Activated CD4-positive, alpha-beta T cell treated with anti-CD3 and anti-CD28 coated beads, Interleukin-2, amount 10 ng/mL, durations not matched to agents 24 days and 14 days (primary cell): ENCODE measurements at regions of chr4 and their contacts with region 1.

Region 1: DNA sequence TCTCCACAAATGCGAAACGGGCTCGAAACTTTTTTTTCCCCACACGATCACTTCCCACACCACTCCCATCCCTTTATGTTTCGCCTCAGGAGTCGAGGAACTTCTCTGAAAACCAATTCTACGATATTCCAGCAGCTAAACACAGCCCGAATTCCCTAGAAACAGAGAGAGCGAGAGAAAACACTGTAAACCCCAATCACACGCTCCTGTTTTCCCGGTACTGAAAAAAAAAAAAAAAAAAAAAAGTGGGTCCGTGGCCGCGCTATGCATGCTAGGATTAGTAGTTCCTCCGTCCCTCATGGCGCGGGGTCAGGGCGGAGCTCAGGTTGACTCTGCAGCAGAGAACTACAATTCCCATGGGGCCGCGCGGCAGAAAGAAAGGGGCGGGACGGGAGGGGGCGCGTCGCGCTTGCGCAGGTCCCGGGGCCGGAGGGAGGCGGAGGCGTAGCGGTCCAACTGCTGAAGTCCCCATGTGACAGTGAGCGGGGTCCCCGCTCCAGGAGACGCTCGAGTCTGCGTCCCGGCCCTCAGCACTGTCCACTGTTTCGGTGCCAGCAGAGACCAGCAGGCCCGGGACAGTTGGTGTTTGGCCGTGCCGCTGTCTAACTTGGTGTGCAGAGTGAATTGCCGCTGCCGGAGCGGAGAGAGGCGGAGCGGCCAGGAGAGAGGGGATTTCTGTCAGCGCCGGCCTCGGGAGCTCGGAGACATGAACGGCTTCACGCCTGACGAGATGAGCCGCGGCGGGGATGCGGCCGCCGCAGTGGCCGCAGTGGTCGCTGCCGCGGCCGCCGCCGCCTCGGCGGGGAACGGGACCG is at the start of gene SAP30:
- DNase-seq: peak; percentile 97
- H3K4me3 Mint-ChIP-seq: peak within 1 kb of the TSS; percentile 100
- H3K27ac Mint-ChIP-seq: peak within 1 kb of the TSS; percentile 99
- H3K4me1 Mint-ChIP-seq: peaks cover 43% of the 10 kb centered on the region
- H3K27me3 Mint-ChIP-seq: no peaks in the 10 kb centered on the region
- total RNA-seq, gene SAP30: 33.1 and 33.8 TPM in 2 replicates

Region 2: DNA sequence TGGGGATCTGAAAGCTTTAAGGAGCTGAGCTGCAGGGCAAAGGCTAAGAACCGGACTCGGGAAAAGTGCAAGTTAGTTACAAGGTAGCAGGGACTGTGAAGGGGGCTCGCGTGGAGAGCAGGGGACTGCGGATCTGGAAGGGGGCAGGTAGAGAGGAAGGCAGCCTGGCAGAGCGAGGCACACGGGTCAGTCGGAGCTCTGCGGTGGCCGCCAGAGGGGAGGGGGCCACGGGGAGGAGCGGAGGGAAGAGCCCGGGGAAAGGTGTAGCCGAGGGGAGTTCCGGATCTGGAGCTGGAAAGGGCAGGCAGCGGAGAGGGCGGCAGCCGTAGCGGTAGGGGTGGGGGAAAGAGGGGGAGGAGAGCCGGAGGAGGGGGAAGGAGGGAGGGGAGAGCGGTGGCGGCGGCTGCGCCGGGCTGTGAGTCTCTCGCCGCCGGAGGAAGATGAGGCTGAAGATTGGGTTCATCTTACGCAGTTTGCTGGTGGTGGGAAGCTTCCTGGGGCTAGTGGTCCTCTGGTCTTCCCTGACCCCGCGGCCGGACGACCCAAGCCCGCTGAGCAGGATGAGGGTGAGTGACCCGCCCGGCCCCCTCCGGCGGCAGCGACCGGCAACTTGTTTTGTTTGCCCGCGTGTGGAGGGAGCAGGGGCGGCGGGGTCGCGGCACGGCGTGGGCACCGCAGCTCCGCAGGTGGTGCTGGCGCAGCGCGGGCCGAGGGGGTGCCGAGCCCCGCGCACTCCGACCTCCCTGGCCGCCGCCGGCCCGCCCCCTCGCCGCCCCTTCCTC is 202.1 kb before region 1 on chr4 and contains the start of gene GALNT7:
- intact Hi-C with region 1: loop called (anchors 1 kb)
- DNase-seq: peak; percentile 86
- H3K4me3 Mint-ChIP-seq: peak within 1 kb of the TSS; percentile 96
- H3K27ac Mint-ChIP-seq: peak within 1 kb of the TSS; percentile 90
- H3K4me1 Mint-ChIP-seq: peaks cover 40% of the 10 kb centered on the region
- H3K27me3 Mint-ChIP-seq: no peaks in the 10 kb centered on the region
- total RNA-seq, gene GALNT7: 25.9 and 26.7 TPM in 2 replicates

Region 3: DNA sequence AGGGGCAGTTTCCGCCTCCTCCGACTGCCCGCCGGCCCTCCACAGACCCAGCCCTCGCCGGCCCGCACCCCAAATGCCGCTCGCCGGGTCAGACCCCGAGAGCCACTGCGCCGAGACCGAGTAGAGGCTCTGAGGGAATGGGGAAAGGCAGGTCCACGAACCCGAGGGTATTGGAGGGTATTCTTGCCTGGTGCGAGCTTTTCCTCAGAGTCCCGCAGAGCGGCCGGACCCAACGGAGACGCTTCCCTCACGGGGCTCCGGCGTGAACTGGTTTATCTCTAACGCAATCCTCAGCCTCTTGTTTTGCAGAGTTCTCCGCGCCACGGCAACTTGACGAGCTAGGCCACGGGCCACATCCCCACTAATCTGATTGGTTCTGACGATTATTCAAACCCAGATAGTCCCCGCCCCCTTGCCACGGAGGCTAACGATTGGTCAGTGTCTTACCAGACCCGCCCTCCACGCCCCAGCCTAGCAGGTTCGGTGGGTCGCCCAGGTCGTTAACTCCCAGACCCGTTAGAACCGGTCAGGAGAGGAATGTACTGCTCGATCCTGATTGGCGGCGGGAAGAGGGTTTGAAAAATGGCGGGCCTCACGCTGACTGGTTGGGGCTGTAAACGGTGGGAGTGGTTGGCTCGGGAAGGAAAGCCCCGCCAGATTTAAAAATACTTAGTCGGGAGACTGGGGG is 36.5 kb before region 1 on chr4 and contains the start of gene HMGB2:
- intact Hi-C with region 1: loop called (anchors 1 kb)
- DNase-seq: peak; percentile 100
- H3K4me3 Mint-ChIP-seq: peak within 1 kb of the TSS; percentile 97
- H3K27ac Mint-ChIP-seq: peak within 1 kb of the TSS; percentile 100
- H3K4me1 Mint-ChIP-seq: peaks cover 47% of the 10 kb centered on the region
- H3K27me3 Mint-ChIP-seq: no peaks in the 10 kb centered on the region
- total RNA-seq, gene HMGB2: 311 and 315 TPM in 2 replicates

Region 4: DNA sequence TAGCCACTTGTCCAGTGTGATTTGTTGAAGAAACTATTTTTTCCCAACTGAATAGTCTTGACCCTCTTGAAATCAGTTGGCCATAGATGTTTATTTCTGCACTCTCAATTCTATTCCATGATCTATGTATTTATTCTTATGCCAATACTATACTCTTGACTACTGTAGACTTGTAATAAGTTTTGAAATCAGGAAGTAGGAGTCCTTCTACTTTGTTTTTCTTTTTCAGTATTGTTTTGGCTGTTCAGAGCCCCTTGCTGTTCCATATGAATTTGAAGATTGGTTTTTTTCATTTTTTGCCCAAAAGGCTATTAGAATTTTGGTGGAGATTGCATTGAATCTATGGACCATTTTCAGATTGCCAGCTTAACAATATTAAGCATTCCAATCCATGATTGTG is 10.3 kb after region 1 on chr4:
- intact Hi-C with region 1: loop called (anchors 1 kb)
- DNase-seq: no peak
- H3K4me3 Mint-ChIP-seq: no peak overlapping the region
- H3K27ac Mint-ChIP-seq: no peak overlapping the region
- H3K4me1 Mint-ChIP-seq: peaks cover 5% of the 10 kb centered on the region
- H3K27me3 Mint-ChIP-seq: peaks cover 5% of the 10 kb centered on the region

Region 5: GRCh38 chr4:173420324-173420752 is 49.7 kb after region 1 on chr4:
- intact Hi-C with region 1: loop called (anchors 2 kb)
- DNase-seq: no peak
- H3K4me3 Mint-ChIP-seq: no peak overlapping the region
- H3K27ac Mint-ChIP-seq: no peak overlapping the region
- H3K4me1 Mint-ChIP-seq: peaks cover 7% of the 10 kb centered on the region
- H3K27me3 Mint-ChIP-seq: peaks cover 3% of the 10 kb centered on the region

Region 6: DNA sequence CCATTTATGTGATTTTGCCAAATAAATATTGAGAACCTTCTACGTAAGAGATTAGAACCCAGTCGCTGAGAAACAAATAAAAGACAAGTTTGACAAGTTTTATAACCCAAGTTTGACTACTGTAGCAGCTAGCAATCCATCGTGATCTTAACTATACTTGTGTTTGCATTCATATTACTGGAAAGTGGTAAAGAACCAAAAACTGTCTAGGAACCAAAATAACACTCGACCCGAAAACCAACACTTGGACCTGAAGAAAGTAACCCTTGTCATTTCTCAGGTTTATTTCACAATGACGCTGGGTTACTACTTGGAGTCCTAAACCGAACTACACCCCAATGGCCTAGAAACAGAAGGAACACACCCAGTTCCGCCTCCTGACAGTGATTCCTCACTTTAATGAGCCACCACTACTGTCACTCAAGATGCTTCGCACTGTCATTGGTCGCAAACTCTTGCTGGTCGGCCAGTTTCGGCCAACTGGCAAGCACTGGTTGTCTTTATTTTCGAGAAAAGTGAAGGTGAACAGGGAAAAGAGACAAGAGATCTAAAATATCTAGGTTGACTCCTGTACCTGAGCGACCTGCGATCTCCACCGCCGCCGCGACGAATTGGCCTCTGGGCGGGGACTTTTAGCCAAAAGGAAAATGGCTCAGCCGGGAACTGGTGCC is 912.3 kb after region 1 on chr4:
- intact Hi-C with region 1: loop called (anchors 5 kb)
- DNase-seq: peak; percentile 95
- H3K4me3 Mint-ChIP-seq: peak overlapping the region; percentile 100
- H3K27ac Mint-ChIP-seq: peak overlapping the region; percentile 99
- H3K4me1 Mint-ChIP-seq: peaks cover 42% of the 10 kb centered on the region
- H3K27me3 Mint-ChIP-seq: no peaks in the 10 kb centered on the region